ENCODE measurements at regions of chr21 and their contacts with region 1.

Region 1: GRCh38 chr21:20538039-20538658 is 460.1 kb upstream of the NCAM2 start:
- DNase-seq: no peak
- ATAC-seq: no peak
- H3K4me3 ChIP-seq: no peak overlapping the region
- H3K27ac ChIP-seq: no peak overlapping the region
- H3K4me1 ChIP-seq: no peaks in the 10 kb centered on the region
- H3K27me3 ChIP-seq: no peaks in the 10 kb centered on the region
- CTCF ChIP-seq: no peak
- POLR2A ChIP-seq: no peak
- RAD21 ChIP-seq: no peak

Region 2: DNA sequence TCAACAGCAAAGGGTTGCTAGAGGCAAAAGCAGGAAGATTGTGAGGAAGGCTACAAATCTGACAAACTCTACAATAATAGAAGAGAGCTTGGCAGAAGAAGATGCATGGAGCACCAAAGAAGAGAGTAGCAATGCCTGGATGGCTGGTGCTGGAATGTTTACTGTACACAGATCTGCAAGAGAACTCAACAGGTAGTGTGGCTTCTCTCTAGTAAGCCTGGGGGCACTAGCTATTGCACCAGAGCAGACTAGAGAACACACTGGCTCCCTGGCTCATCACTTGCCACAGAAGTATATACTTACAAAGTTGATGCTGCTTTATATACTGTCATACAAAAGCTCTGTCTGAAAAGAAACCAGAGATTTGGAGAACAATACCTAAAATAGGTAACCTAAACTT is 15.0 kb before region 1 on chr21:
- CTCF ChIA-PET with region 1: no interaction called
- POLR2A ChIA-PET with region 1: interaction called, 21 read pairs
- dilution Hi-C with region 1: no loop called
- in situ Hi-C with region 1: no loop called
- intact Hi-C with region 1: no loop called
- DNase-seq: no peak
- ATAC-seq: no peak
- H3K4me3 ChIP-seq: no peak overlapping the region
- H3K27ac ChIP-seq: no peak overlapping the region
- H3K4me1 ChIP-seq: no peaks in the 10 kb centered on the region
- H3K27me3 ChIP-seq: no peaks in the 10 kb centered on the region
- CTCF ChIP-seq: no peak
- POLR2A ChIP-seq: no peak
- RAD21 ChIP-seq: no peak

Measured in IMR-90 (cell line).